Mammary epithelial cell (primary cell): ENCODE measurements at regions of chr16 and their contacts with region 1.

Region 1: GRCh38 chr16:3023669-3024478 is at the starts of genes HCFC1R1 and THOC6:
- DNase-seq: peak; percentile 98
- H3K4me3 ChIP-seq: peak within 1 kb of the TSS; percentile 60 to 97 (median 90)
- H3K27ac ChIP-seq: peak within 1 kb of the TSS; percentile 97
- H3K4me1 ChIP-seq: peaks cover 26% of the 10 kb centered on the region
- H3K27me3 ChIP-seq: no peaks in the 10 kb centered on the region
- CTCF ChIP-seq: no peak
- total RNA-seq, gene HCFC1R1: 2.2 to 20.4 TPM
- total RNA-seq, gene THOC6: 8.3 to 26.8 TPM

Region 2: DNA sequence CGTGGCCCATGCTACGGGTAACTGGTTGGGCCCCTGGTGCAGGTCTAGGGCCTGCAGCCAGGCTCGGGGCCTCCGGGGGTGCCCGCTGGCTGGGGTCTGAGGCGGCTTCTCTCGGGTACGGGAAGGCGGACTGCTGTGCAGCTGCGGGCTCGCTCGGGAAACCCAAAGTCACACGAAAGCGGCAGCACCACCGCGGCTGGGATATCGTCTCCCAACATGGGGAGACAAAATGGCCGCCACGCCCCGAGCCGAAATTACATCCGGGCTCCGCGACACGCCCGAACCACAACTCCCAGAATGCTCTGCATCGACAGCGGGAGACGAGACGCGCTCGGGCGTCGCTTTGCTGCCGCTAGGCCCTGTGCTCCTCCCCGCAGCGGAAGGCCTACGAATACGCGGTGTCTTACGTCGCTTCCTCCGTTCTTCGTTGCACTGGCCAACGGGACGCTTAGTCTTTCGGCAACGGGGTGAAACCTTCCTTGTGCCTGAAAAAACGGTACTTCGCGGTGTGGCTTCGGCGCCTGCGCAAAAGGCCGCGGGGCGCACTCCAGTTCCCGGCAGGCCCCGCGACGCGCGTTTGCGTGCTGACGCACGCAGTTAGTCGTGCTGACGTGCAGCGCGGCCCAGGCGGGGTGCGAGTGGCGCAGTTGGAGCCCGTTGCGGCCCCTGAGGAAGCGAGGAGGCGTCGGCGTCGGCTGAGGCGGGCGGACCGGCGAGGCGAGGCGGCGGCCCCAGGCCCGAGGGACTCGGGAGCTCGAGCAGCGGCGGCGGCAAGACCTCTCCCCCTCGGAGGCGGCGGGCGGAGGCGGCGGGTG is 271.6 kb before region 1 on chr16 and contains the start of gene SRRM2:
- CTCF ChIA-PET with region 1: no interaction called
- dilution Hi-C with region 1: no loop called
- in situ Hi-C with region 1: no loop called
- intact Hi-C with region 1: loop called (anchors 5 kb)
- DNase-seq: peak; percentile 95
- H3K4me3 ChIP-seq: peak within 1 kb of the TSS; percentile 69 to 95 (median 95)
- H3K27ac ChIP-seq: peak within 1 kb of the TSS; percentile 91
- H3K4me1 ChIP-seq: peaks cover 21% of the 10 kb centered on the region
- H3K27me3 ChIP-seq: no peaks in the 10 kb centered on the region
- CTCF ChIP-seq: no peak
- total RNA-seq, gene SRRM2: 76.5 to 493 TPM

Region 3: GRCh38 chr16:3003582-3004302 is 20.1 kb before region 1 on chr16:
- CTCF ChIA-PET with region 1: interaction called, 15 read pairs
- dilution Hi-C with region 1: no loop called
- in situ Hi-C with region 1: no loop called
- intact Hi-C with region 1: loop called (anchors 1 kb)
- DNase-seq: peak; percentile 99
- H3K4me3 ChIP-seq: peak overlapping the region in 2 of 3 experiments; percentile 9 to 39
- H3K27ac ChIP-seq: no peak overlapping the region
- H3K4me1 ChIP-seq: no peaks in the 10 kb centered on the region
- H3K27me3 ChIP-seq: no peaks in the 10 kb centered on the region
- CTCF ChIP-seq: peak; percentile 23 to 69

Region 4: GRCh38 chr16:3038256-3038655 is 14.4 kb after region 1 on chr16:
- CTCF ChIA-PET with region 1: no interaction called
- dilution Hi-C with region 1: no loop called
- in situ Hi-C with region 1: no loop called
- intact Hi-C with region 1: no loop called
- DNase-seq: peak; percentile 79
- H3K4me3 ChIP-seq: no peak overlapping the region
- H3K27ac ChIP-seq: no peak overlapping the region
- H3K4me1 ChIP-seq: peaks cover 11% of the 10 kb centered on the region
- H3K27me3 ChIP-seq: no peaks in the 10 kb centered on the region
- CTCF ChIP-seq: no peak

Region 5: GRCh38 chr16:3182608-3183444 is 159.0 kb after region 1 on chr16:
- CTCF ChIA-PET with region 1: no interaction called
- dilution Hi-C with region 1: no loop called
- in situ Hi-C with region 1: no loop called
- intact Hi-C with region 1: no loop called
- DNase-seq: peak; percentile 77
- H3K4me3 ChIP-seq: peak overlapping the region; percentile 63 to 75 (median 65)
- H3K27ac ChIP-seq: peak overlapping the region; percentile 18
- H3K4me1 ChIP-seq: no peaks in the 10 kb centered on the region
- H3K27me3 ChIP-seq: no peaks in the 10 kb centered on the region
- CTCF ChIP-seq: peak; percentile 45 to 64

Region 6: DNA sequence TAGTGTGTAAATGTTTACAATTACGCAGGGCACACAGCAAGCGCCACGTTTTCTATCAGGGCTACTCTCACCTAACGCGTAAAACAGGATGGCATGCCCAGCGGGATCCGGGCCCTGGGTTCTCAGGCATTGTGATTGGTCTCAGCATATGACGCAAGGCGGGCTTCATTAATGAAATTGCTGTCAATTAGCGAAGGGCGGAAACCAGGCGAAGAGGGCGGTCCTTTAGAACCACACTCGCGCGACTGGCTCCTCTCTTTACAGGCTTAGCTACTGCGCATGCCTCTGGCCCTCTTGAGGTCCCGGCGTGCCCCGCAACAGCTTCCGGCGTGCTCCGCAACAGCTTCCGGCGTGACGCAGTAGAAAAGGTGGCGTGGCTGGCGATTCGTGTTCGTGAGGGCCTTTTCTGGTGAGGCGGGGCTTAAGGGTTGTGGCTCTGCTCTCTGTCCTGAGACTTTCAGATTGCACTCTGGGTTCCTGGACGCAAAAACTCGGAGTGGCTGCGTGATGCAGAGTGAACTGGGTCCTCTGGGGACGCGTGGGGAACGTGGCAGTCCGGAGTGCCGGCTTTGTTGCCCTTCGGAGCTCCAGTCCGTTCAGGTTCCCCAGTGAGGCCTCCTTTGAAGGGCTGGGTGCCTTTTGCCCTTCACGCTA is 341.0 kb after region 1 on chr16:
- CTCF ChIA-PET with region 1: no interaction called
- dilution Hi-C with region 1: no loop called
- in situ Hi-C with region 1: no loop called
- intact Hi-C with region 1: no loop called
- DNase-seq: peak; percentile 90
- H3K4me3 ChIP-seq: peak overlapping the region; percentile 28 to 56 (median 43)
- H3K27ac ChIP-seq: peak overlapping the region; percentile 35
- H3K4me1 ChIP-seq: peaks cover 2% of the 10 kb centered on the region
- H3K27me3 ChIP-seq: no peaks in the 10 kb centered on the region
- CTCF ChIP-seq: no peak